Psoas muscle (tissue), 8 donors: ENCODE measurements at regions of chr1 and their contacts with region 1.

Region 1: DNA sequence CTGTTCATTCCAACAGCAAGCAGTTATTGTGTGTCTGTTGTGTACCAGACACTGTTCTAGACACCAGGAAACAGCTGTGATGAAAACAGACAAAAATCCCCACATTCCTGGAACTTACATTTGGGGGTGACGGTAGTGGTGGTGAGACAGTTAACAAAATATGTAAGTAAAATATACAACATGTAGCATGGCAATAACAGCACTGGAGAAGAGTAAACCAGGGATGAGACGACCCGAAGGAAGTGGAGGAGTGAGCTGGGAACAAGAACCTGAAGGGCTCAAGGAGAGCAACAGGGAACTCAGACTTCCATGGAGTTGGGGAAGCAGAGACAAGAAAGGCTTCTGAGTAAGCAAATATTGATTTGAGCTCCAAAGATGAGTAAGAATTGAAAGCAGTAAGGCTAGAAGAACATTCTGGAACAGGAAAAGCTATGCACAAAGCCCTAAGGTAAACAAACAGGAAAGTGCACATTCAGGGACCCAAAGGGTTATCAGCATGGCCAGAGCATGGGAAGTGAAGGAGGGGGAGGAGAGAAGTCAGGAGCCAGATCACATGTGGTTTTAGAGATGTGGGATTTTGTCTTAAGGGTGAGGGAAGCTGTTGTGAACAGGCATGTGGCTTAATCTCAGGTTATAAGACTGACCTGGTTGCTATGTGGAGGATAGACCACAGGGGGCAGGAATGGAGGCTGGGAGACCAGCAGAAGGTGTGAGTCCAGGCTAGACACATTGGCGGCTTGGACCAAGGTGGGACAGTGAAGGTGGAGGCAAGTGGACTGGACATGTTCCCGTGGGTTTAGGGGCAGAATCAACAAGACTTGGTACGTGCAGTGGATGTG is 7.3 kb downstream of the CSF1 start:
- DNase-seq: no peak
- ATAC-seq: no peak
- H3K4me3 ChIP-seq: no peak overlapping the region
- H3K27ac ChIP-seq: no peak overlapping the region
- H3K4me1 ChIP-seq: peaks cover 3% of the 10 kb centered on the region
- H3K27me3 ChIP-seq: no peaks in the 10 kb centered on the region
- CTCF ChIP-seq: no peak

Region 2: GRCh38 chr1:109790735-109791494 is 127.1 kb before region 1 on chr1:
- intact Hi-C with region 1: loop called (anchors 5 kb)
- DNase-seq: peak; percentile 48 to 68
- ATAC-seq: peak in 3 of 4 donors; percentile 17 to 51 (median 45)
- H3K4me3 ChIP-seq: no peak overlapping the region
- H3K27ac ChIP-seq: no peak overlapping the region
- H3K4me1 ChIP-seq: peaks cover 20% of the 10 kb centered on the region
- H3K27me3 ChIP-seq: no peaks in the 10 kb centered on the region
- CTCF ChIP-seq: peak; percentile 37

Region 3: DNA sequence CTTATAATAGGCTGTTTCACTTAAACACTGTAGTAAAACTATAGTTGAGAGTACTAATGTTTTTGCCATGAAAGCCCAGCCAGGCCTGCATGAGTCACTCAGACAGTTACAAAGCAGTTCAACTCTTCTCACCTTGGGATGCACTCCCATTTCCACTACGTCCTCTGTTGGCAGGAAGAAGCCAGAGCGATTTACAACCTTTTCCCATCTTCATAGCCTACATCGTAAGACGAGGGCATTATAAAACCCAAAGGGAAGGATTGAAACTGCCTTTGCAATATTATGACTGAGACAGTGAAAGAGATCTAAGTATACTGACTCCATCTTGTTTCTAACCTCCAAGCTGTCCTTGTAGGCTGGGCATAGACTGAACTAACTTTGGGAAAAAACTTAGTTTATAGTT is 79.1 kb before region 1 on chr1:
- intact Hi-C with region 1: no loop called
- DNase-seq: no peak
- ATAC-seq: no peak
- H3K4me3 ChIP-seq: no peak overlapping the region
- H3K27ac ChIP-seq: no peak overlapping the region
- H3K4me1 ChIP-seq: no peaks in the 10 kb centered on the region
- H3K27me3 ChIP-seq: no peaks in the 10 kb centered on the region
- CTCF ChIP-seq: no peak